HCT116 (cell line): ENCODE measurements at regions of chr4 and their contacts with region 1.

Region 1: DNA sequence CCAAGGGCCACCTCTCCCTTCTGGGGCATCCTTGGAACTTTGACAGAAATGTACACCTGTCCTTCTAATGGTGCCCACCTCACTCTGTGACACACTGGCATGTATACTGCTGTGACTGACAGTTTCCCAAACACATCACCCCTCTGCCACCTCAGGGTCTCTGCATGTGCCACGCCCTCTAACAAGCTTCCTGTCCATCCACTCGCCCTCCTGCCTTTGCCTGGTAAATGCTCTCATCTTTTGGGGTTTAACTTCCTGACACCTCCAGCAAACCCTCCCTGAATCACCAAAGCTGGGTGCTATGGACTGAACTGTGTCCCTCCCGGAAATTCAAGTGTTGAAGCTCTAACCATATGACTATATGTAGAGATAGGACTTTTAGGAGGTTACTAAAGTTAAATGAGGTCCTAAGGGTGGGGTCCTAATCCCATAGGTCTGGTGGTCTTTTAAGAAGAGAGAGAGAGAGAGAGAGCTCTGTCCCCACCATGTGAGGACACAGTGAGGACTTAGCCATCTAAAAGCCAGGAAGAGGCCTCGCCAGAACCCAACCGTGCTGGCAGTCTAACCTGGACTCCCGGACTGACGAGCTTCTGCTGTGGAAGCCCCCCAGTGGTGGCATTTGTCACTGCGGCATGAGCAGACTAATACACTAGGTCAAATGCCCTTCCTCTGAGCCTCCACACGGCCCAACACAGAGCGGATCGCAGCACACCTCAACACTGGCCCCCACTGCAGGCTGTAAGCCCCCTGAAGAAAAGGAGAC is 95.6 kb downstream of the AFAP1 start:
- DNase-seq: peak; percentile 70
- ATAC-seq: peak; percentile 92
- H3K4me3 ChIP-seq: no peak overlapping the region
- H3K27ac ChIP-seq: peak overlapping the region; percentile 89
- H3K4me1 ChIP-seq: peaks cover 29 to 36% of the 10 kb centered on the region in 2 experiments
- H3K27me3 ChIP-seq: no peaks in the 10 kb centered on the region
- CTCF ChIP-seq: peak; percentile 23 to 79 (median 71); a peak in 5 of 6 replicates
- POLR2A ChIP-seq: no peak
- RAD21 ChIP-seq: peak; percentile 48; the same call in 1 of the 2 replicates

Region 2: GRCh38 chr4:7612311-7612897 is 231.6 kb before region 1 on chr4:
- CTCF ChIA-PET with region 1: no interaction called
- POLR2A ChIA-PET with region 1: no interaction called
- RAD21 ChIA-PET with region 1: no interaction called
- intact Hi-C with region 1: no loop called
- DNase-seq: no peak
- ATAC-seq: no peak
- H3K4me3 ChIP-seq: no peak overlapping the region
- H3K27ac ChIP-seq: no peak overlapping the region
- H3K4me1 ChIP-seq: no peaks in the 10 kb centered on the region
- H3K27me3 ChIP-seq: peaks cover 29% of the 10 kb centered on the region
- CTCF ChIP-seq: no peak
- POLR2A ChIP-seq: no peak
- RAD21 ChIP-seq: no peak

Region 3: GRCh38 chr4:7973545-7973981 is 129.6 kb after region 1 on chr4:
- CTCF ChIA-PET with region 1: no interaction called
- POLR2A ChIA-PET with region 1: no interaction called
- RAD21 ChIA-PET with region 1: no interaction called
- intact Hi-C with region 1: loop called (anchors 5 kb)
- DNase-seq: no peak
- ATAC-seq: no peak
- H3K4me3 ChIP-seq: no peak overlapping the region; a peak in 1 of 4 replicates
- H3K27ac ChIP-seq: peak overlapping the region; percentile 86
- H3K4me1 ChIP-seq: peaks cover 57 to 64% of the 10 kb centered on the region in 2 experiments
- H3K27me3 ChIP-seq: no peaks in the 10 kb centered on the region
- CTCF ChIP-seq: no peak
- POLR2A ChIP-seq: no peak
- RAD21 ChIP-seq: no peak

Region 4: GRCh38 chr4:8158710-8159536 is 314.9 kb after region 1 on chr4 and contains the start of gene ABLIM2:
- CTCF ChIA-PET with region 1: no interaction called
- POLR2A ChIA-PET with region 1: no interaction called
- RAD21 ChIA-PET with region 1: no interaction called
- intact Hi-C with region 1: loop called (anchors 2 kb)
- DNase-seq: peak; percentile 91
- ATAC-seq: peak; percentile 98
- H3K4me3 ChIP-seq: peak within 1 kb of the TSS; percentile 57 to 74
- H3K27ac ChIP-seq: peak within 1 kb of the TSS; percentile 42; the same call in 1 of the 2 replicates
- H3K4me1 ChIP-seq: peaks cover 10 to 30% of the 10 kb centered on the region in 2 experiments
- H3K27me3 ChIP-seq: no peaks in the 10 kb centered on the region
- CTCF ChIP-seq: no peak
- POLR2A ChIP-seq: peak; percentile 56
- RAD21 ChIP-seq: no peak
- total RNA-seq, gene ABLIM2: 6.1 TPM